ENCODE measurements at regions of chrX and their contacts with region 1.

Region 1: DNA sequence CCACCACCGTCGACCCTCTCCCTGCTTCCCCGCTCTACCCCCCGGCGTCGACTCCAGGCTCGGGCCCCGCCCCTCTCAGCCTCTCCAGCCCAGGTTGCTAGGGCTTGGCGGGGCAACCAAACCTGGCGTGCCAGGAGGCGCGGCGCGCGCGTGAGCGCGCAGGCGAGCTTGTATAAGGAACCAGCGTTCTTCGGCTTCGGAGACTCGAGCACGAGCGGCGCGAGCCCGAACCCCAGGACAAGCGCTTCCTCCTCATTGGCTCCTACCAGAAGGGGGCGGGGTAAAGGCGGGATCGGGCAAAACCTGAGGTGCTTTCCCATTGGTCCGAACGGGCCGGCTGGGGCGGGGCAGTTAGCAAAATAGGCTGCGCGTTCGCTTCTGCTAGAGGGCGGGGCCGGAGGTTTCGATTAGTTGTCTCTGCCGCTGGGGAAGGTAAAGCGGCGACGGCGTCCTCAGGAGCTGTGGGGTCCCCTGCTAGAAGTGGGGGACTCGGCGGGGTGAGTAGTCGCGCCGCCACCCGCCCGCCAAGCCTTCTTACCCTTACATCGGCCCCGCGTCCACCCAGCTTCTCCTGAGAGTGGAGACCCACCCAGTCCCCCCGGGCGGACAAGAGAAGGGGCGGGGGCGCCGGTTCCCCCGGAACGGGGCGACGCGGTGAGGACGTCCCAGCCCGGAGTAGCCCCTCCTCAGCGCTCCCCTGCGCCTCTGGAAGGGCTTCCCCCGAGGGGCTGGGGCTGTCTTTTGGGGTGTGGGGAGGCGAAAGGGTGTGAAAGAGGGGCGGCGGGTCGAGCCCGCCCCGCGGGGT is at the start of gene CDKL5:
- DNase-seq: peak; percentile 90 to 98 (median 95)
- ATAC-seq: peak; percentile 91
- H3K4me3 ChIP-seq: peak within 1 kb of the TSS; percentile 77 to 83
- H3K4me3 Mint-ChIP-seq: peak within 1 kb of the TSS; percentile 91
- H3K27ac ChIP-seq: peak within 1 kb of the TSS; percentile 73 to 80
- H3K27ac Mint-ChIP-seq: peak within 1 kb of the TSS; percentile 90
- H3K4me1 ChIP-seq: no peaks in the 10 kb centered on the region
- H3K4me1 Mint-ChIP-seq: peaks cover 10% of the 10 kb centered on the region
- H3K27me3 ChIP-seq: no peaks in the 10 kb centered on the region
- H3K27me3 Mint-ChIP-seq: peaks cover 2% of the 10 kb centered on the region
- CTCF ChIP-seq: no peak
- total RNA-seq, gene CDKL5: 0.78 to 2.5 TPM

Region 2: DNA sequence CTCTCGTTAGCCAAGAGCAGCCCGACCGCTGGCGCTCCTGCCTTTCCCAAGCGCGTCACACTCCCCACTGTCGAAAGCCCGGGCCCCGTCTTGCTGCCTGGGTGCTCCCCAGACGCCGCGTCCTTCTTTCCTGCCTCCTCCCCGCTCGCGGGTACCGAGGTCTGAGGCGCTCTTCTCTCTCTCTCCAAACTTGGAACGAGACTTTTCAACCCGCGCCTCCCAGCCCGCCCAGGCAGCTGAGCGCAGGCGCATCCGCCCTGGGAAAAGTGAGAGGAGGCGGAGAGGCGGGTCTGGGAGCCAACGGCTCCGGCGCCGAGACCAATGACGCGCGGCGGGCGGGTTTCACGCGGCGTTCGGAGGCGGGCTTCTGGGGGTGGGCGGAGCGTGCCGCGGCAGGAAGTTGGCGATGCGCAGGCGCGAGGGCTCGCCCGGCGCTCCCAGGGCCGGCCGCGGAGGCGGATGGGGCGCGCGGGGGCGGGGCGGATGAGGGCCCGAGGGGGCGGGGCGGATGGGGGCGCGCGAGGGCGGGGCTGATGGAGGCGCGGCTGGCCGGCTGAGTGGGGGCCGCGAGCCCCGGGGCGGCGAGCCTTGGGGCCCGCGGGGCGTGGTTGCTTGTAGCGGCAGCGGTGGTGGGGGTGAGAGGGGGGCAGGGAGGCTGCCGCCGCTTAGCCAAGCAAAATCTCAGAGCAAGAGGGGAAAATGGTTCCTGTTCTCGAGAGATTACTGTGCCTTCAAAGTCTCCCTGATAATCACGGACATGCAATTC is 1555.1 kb before region 1 on chrX and contains the start of gene RBBP7:
- CTCF ChIA-PET with region 1: no interaction called
- POLR2A ChIA-PET with region 1: no interaction called
- intact Hi-C with region 1: loop called in 1 of 2 experiments (anchors 5 kb)
- DNase-seq: peak; percentile 83 to 97 (median 89)
- ATAC-seq: peak; percentile 80
- H3K4me3 ChIP-seq: peak within 1 kb of the TSS; percentile 73 to 82
- H3K4me3 Mint-ChIP-seq: peak within 1 kb of the TSS; percentile 94
- H3K27ac ChIP-seq: peak within 1 kb of the TSS; percentile 91 to 97
- H3K27ac Mint-ChIP-seq: peak within 1 kb of the TSS; percentile 97
- H3K4me1 ChIP-seq: peaks cover 20% of the 10 kb centered on the region
- H3K4me1 Mint-ChIP-seq: peaks cover 42% of the 10 kb centered on the region
- H3K27me3 ChIP-seq: no peaks in the 10 kb centered on the region
- H3K27me3 Mint-ChIP-seq: no peaks in the 10 kb centered on the region
- CTCF ChIP-seq: no peak
- total RNA-seq, gene RBBP7: 130 to 131 TPM

Region 3: GRCh38 chrX:18354369-18355223 is 70.8 kb before region 1 on chrX and contains the start of gene SCML2:
- CTCF ChIA-PET with region 1: no interaction called
- POLR2A ChIA-PET with region 1: interaction called, 3 read pairs
- intact Hi-C with region 1: loop called in 1 of 2 experiments (anchors 10 kb)
- DNase-seq: peak in 7 of 9 experiments; percentile 1 to 50 (median 19)
- ATAC-seq: peak; percentile 49
- H3K4me3 ChIP-seq: peak within 1 kb of the TSS; percentile 41 to 54
- H3K4me3 Mint-ChIP-seq: peak within 1 kb of the TSS; percentile 81
- H3K27ac ChIP-seq: no peak within 1 kb of the TSS
- H3K27ac Mint-ChIP-seq: no peak within 1 kb of the TSS
- H3K4me1 ChIP-seq: peaks cover 4% of the 10 kb centered on the region
- H3K4me1 Mint-ChIP-seq: peaks cover 9% of the 10 kb centered on the region
- H3K27me3 ChIP-seq: no peaks in the 10 kb centered on the region
- H3K27me3 Mint-ChIP-seq: peaks cover 3% of the 10 kb centered on the region
- CTCF ChIP-seq: no peak
- total RNA-seq, gene SCML2: 0.33 TPM

Region 4: GRCh38 chrX:18565727-18566126 is 140.3 kb after region 1 on chrX:
- CTCF ChIA-PET with region 1: no interaction called
- POLR2A ChIA-PET with region 1: no interaction called
- intact Hi-C with region 1: no loop called
- DNase-seq: no peak
- ATAC-seq: no peak
- H3K4me3 ChIP-seq: no peak overlapping the region
- H3K4me3 Mint-ChIP-seq: no peak overlapping the region
- H3K27ac ChIP-seq: no peak overlapping the region
- H3K27ac Mint-ChIP-seq: no peak overlapping the region
- H3K4me1 ChIP-seq: no peaks in the 10 kb centered on the region
- H3K4me1 Mint-ChIP-seq: no peaks in the 10 kb centered on the region
- H3K27me3 ChIP-seq: no peaks in the 10 kb centered on the region
- H3K27me3 Mint-ChIP-seq: no peaks in the 10 kb centered on the region
- CTCF ChIP-seq: no peak

Region 5: DNA sequence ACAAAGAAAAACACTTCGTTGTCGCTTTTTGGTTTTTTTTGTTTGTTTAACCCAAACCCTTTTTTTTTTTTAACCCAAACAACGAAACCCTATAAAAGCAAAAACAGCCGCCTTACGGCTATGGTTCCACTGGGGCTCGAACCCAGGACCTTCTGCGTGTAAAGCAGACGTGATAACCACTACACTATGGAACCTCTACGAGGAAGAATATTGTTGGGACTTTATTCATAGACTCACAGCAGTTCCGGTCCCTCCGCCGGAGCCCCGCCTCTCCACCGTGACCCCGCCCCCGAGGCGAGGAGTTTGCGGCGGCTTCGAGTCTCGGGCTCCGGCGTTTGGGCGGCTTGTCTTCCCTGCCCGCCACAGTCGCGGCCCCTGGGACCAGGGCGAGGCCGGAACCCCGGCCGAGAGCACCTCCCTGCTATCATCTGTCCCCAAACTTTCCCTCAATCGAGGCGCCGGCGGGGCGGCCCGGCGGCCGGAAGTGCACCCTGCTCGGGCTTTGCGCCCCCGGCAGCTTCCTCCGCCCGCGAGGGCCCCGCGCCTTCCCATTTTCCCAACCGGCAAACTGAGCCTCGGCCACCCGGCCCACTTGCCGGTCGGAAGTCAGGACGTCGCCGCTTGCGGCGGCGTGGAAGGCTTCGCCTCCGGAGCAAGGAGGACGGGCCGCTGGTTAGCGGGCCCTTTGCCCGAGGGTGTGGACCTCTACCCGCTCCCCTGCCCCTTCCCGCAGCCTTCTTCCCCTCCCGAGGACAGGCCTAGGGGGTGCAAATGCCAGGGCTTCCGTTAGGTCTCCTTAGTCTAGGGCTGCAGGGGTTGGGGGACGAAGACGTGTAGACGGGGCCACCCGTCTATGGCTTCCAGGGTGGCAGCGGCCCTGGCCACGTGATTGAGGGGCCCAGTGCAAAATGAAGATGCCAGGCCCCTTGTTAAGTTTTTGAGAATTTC is 249.7 kb after region 1 on chrX:
- CTCF ChIA-PET with region 1: no interaction called
- POLR2A ChIA-PET with region 1: interaction called, 3 read pairs
- intact Hi-C with region 1: loop called (anchors 1 to 2 kb)
- DNase-seq: peak; percentile 66 to 88 (median 73)
- ATAC-seq: peak; percentile 90
- H3K4me3 ChIP-seq: peak overlapping the region; percentile 70 to 76
- H3K4me3 Mint-ChIP-seq: peak overlapping the region; percentile 81
- H3K27ac ChIP-seq: peak overlapping the region; percentile 76 to 84
- H3K27ac Mint-ChIP-seq: peak overlapping the region; percentile 89
- H3K4me1 ChIP-seq: no peaks in the 10 kb centered on the region
- H3K4me1 Mint-ChIP-seq: peaks cover 11% of the 10 kb centered on the region
- H3K27me3 ChIP-seq: no peaks in the 10 kb centered on the region
- H3K27me3 Mint-ChIP-seq: no peaks in the 10 kb centered on the region
- CTCF ChIP-seq: no peak

Region 6: DNA sequence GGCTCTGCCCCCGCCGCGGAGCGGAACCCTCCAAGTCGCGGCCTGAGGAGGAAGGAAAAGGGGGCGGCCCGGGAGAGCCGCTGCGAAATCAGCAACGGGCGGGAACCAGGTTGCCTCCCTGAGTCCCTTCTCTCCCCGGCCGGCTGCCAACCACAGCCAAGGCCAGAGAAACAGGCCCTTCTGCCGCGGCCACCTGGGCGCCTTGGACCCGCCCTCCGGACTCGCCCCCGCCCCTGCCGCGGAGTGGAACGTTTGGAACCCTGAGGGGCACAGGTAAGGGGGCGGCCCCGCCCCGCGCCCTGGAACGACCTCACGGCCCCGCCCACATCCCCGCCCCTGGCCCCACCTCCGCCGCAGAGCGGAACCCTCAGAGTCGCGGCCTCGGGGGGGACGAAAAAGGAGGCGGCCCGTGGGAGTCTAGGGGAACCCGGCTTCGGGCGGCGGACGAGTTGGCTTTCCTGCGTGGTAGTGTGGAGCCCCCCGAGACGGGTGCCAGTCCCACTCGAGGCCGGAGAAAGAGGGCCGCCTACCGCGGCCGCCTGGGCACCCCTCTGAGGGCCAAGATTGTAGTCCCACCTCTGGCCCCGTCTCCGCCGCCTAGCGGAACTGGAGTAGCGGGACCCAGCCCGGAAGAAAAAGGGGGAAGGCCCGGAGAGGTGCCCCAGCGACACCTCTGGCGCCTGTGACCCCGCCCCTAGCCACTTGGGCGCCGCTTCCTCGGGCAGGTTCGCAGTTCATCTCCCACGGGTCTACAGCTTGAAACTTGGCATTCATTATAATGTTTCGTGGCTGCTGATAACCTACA is 559.2 kb after region 1 on chrX:
- CTCF ChIA-PET with region 1: no interaction called
- POLR2A ChIA-PET with region 1: no interaction called
- intact Hi-C with region 1: loop called (anchors 1 to 2 kb)
- DNase-seq: peak; percentile 78 to 90 (median 82)
- ATAC-seq: peak; percentile 88
- H3K4me3 ChIP-seq: peak overlapping the region; percentile 75 to 79
- H3K4me3 Mint-ChIP-seq: peak overlapping the region; percentile 83
- H3K27ac ChIP-seq: peak overlapping the region; percentile 82 to 95
- H3K27ac Mint-ChIP-seq: peak overlapping the region; percentile 94
- H3K4me1 ChIP-seq: peaks cover 15% of the 10 kb centered on the region
- H3K4me1 Mint-ChIP-seq: peaks cover 27% of the 10 kb centered on the region
- H3K27me3 ChIP-seq: no peaks in the 10 kb centered on the region
- H3K27me3 Mint-ChIP-seq: no peaks in the 10 kb centered on the region
- CTCF ChIP-seq: peak; percentile 27

Region 7: GRCh38 chrX:19343535-19344408 is 918.4 kb after region 1 on chrX and contains the start of gene PDHA1:
- CTCF ChIA-PET with region 1: no interaction called
- POLR2A ChIA-PET with region 1: no interaction called
- intact Hi-C with region 1: loop called (anchors 1 to 2 kb)
- DNase-seq: peak; percentile 83 to 96 (median 92)
- ATAC-seq: peak; percentile 97
- H3K4me3 ChIP-seq: peak within 1 kb of the TSS; percentile 62 to 71
- H3K4me3 Mint-ChIP-seq: peak within 1 kb of the TSS; percentile 86
- H3K27ac ChIP-seq: peak within 1 kb of the TSS; percentile 77 to 82
- H3K27ac Mint-ChIP-seq: peak within 1 kb of the TSS; percentile 92
- H3K4me1 ChIP-seq: peaks cover 15% of the 10 kb centered on the region
- H3K4me1 Mint-ChIP-seq: peaks cover 23% of the 10 kb centered on the region
- H3K27me3 ChIP-seq: no peaks in the 10 kb centered on the region
- H3K27me3 Mint-ChIP-seq: no peaks in the 10 kb centered on the region
- CTCF ChIP-seq: no peak
- total RNA-seq, gene PDHA1: 107 to 115 TPM

Measured in CD8-positive, alpha-beta T cell (primary cell).